Left cardiac atrium (tissue), 4 donors: ENCODE measurements at regions of chr9 and their contacts with region 1.

Region 1: DNA sequence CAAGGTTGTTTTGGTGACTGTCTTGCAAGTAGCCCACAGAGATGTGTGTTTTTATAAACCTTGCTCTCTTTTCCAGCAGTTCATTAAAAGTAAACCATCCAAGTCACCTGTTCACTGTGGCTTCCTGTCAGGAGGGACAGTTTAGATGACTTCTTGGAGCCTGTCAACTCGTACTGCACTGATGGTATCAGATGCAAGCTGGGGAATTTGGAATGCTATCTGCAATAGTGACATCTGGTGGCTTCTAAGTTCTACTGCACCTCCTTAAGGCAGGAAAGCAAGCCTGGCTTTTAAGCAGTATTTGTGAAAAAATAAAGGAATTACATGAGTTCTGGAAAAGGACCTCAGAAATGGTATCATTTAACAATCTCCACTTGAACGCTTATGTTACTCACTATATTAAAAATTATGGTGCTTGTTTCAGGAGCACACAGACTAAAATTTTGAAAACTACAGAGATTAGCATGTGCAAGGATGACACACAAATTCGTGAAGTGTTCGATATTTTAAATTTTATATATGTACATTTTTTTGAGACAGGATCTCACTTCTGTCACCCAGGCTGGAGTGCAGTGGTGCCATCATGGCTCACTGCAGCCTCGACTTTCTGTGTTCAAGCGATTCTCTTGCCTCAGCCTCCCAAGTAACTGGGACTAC is 164.0 kb downstream of the TTC39B start:
- DNase-seq: no peak
- ATAC-seq: peak; percentile 57 to 70

Region 2: DNA sequence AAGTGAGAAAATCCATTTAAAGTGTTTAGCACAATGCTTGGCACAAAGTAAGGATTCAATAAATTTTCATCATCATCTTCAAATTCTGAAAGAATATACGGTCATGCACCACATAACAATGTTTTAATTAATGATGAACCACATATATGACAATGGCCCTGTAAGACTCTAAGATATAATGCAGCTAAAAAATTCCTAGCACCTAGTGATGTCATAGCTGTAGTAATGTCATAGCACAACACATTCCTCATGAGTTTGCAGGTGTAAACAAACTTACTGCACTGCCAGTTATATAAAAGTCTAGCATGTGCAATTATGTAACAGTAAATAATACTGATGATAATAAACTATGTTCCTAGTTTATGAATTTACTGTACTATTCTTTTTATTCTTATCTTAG is 54.8 kb before region 1 on chr9:
- intact Hi-C with region 1: no loop called
- DNase-seq: no peak
- ATAC-seq: no peak

Region 3: DNA sequence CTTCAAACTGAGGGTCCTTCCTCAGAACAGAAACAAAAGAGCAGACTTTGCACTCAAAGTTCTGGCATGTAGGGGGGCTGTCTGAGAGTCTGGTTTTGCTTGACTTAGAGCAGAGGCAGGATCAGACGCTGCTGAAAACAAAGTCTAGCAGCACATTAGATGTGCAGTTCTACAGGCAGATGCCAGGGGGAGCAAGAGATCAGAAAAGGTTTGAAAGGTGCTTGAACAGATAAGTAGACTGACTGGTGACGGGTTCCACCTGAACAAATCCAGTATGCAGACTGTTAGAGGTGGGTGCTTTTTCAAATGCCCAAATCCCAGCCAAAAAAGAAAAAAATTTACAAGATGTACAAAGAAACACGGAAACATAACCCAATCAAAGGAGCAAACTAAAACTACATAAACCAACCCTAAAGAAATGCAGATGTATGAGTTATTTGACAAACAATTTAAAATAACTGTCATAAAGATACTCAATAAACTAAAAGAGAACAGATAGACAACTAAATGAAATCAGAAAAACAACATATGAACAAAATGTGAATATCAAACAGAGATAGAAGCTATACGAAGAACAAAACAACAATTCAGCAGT is 38.1 kb before region 1 on chr9:
- intact Hi-C with region 1: loop called (anchors 5 kb)
- DNase-seq: no peak
- ATAC-seq: peak in 1 of 2 donors; percentile 35

Region 4: GRCh38 chr9:15403155-15403554 is 260.1 kb after region 1 on chr9:
- intact Hi-C with region 1: no loop called
- DNase-seq: no peak
- ATAC-seq: no peak